ENCODE measurements at regions of chr16 and their contacts with region 1.

Region 1: DNA sequence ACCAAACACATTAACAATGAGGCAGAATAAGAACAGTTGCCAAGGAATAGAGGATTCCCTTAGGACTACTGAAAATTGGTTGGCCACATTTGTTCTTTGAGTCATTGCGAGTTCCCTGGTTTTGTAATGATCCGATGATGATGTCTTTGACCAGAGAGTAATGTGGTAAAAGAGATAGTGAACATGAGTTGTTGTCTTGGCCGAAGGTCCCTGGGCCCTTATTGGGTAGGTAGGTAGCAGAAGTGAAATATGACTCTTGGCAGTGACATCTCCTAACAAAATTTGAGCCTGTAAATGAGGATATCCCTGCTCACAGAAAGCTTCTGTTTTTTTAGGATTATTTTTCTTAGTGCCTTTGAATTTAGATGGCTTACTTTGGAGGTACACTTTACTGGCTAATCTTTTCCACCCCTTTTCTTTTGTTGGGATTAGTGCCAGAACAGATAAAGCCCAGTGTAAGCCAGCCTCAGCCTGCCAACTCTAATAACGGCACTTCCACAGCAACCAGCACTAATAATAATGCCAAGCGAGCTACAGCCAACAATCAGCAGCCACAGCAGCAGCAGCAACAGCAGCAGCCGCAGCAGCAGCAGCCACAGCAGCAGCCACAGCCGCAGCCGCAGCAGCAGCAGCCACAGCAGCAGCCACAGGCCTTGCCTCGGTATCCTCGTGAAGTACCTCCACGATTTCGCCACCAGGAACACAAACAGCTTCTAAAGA is 47.2 kb downstream of the TNRC6A start:
- DNase-seq: peak; percentile 33 to 68 (median 63)
- ATAC-seq: peak; percentile 80 to 87 (median 84)
- H3K4me3 ChIP-seq: no peak overlapping the region
- H3K27ac ChIP-seq: peak overlapping the region in 11 of 12 donors; percentile 28 to 75 (median 62)
- H3K4me1 ChIP-seq: peaks cover 0 to 60% (median 35%) of the 10 kb centered on the region in 12 donors
- H3K27me3 ChIP-seq: no peaks in the 10 kb centered on the region
- CTCF ChIP-seq: no peak
- POLR2A ChIP-seq: no peak

Region 2: DNA sequence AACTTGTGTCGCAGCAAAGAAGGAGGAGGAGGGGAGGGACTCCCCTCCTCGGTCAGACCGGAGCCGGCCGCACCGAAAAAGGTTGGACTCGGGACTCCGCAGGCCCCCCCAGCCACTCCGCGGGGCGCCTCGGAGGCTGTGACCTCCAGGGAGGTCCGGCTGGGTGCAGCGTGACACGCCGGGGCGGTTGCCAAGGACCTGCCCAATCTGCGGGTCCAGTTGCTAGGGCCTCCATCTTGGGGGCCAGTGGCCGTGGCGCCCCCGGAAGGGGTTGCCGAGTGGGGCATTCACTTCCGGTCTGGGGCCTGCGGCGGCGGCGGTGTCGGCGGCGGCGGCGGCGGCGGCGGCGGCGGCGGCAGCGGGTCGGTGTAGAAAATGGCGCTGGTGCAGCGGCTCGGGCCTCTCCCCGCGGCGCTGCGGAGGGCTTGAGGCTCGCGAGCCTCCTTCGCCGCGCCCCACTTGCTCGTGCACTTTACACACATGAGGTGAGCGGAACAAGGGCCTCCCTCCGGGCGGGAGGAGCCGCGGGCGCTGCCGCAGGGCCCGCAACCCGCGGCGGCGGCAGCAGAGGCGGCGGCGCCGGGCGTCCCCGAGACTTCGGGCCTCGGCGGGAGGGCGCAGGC is 47.2 kb before region 1 on chr16 and contains the start of gene TNRC6A:
- intact Hi-C with region 1: loop called in 5 of 10 experiments (anchors 2 to 10 kb)
- DNase-seq: peak; percentile 91 to 96 (median 94)
- ATAC-seq: peak; percentile 89 to 96 (median 94)
- H3K4me3 ChIP-seq: peak within 1 kb of the TSS; percentile 57 to 94 (median 84)
- H3K27ac ChIP-seq: peak within 1 kb of the TSS; percentile 83 to 99 (median 94)
- H3K4me1 ChIP-seq: peaks cover 3 to 43% (median 37%) of the 10 kb centered on the region in 12 donors
- H3K27me3 ChIP-seq: no peaks in the 10 kb centered on the region
- CTCF ChIP-seq: no peak
- POLR2A ChIP-seq: peak in 1 of 2 donors; percentile 72
- total RNA-seq, gene TNRC6A: 26.4 to 53.1 (median 37.6) TPM